ENCODE measurements at regions of chr12 and their contacts with region 1.

Region 1: GRCh38 chr12:96687719-96688118 is 198.3 kb downstream of the CFAP54 start:
- DNase-seq: no peak
- H3K4me3 ChIP-seq: no peak overlapping the region
- H3K4me3 Mint-ChIP-seq: no peak overlapping the region
- H3K27ac Mint-ChIP-seq: no peak overlapping the region
- H3K4me1 ChIP-seq: no peaks in the 10 kb centered on the region
- H3K4me1 Mint-ChIP-seq: no peaks in the 10 kb centered on the region
- H3K27me3 ChIP-seq: no peaks in the 10 kb centered on the region
- H3K27me3 Mint-ChIP-seq: no peaks in the 10 kb centered on the region
- CTCF ChIP-seq: no peak

Region 2: DNA sequence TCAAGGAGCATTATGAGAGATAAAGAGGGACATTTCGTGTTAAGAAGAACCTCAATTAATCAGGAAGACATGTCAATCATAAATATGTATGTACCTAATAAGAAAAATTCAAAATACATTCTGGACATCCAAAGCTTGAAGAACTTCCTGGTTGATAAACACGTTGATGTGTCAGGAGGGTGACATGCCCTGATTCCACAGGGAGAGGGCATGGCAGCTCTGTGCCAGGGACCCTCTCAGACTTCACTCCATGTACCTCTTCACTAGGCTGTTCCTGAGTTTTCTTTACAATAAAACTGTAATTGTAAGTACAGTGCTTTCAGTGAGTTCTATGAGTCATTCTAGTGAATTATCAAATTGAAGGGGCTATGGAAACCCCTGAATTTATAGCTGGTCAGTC is 34.8 kb before region 1 on chr12:
- CTCF ChIA-PET with region 1: no interaction called
- POLR2A ChIA-PET with region 1: no interaction called
- intact Hi-C with region 1: loop called (anchors 1 kb)
- DNase-seq: no peak
- H3K4me3 ChIP-seq: no peak overlapping the region
- H3K4me3 Mint-ChIP-seq: no peak overlapping the region
- H3K27ac Mint-ChIP-seq: no peak overlapping the region
- H3K4me1 ChIP-seq: no peaks in the 10 kb centered on the region
- H3K4me1 Mint-ChIP-seq: peaks cover 6% of the 10 kb centered on the region
- H3K27me3 ChIP-seq: no peaks in the 10 kb centered on the region
- H3K27me3 Mint-ChIP-seq: peaks cover 9% of the 10 kb centered on the region
- CTCF ChIP-seq: no peak